ENCODE measurements at regions of chr19 and their contacts with region 1.

Region 1: GRCh38 chr19:9834726-9835506 is at the start of gene PIN1:
- DNase-seq: peak; percentile 98 to 100 (median 99)
- ATAC-seq: peak; percentile 98
- H3K4me3 ChIP-seq: peak within 1 kb of the TSS; percentile 92
- H3K4me3 Mint-ChIP-seq: peak within 1 kb of the TSS; percentile 83 to 97 (median 95)
- H3K27ac ChIP-seq: peak within 1 kb of the TSS; percentile 71
- H3K27ac Mint-ChIP-seq: peak within 1 kb of the TSS; percentile 82 to 99 (median 94)
- H3K4me1 ChIP-seq: peaks cover 10 to 11% of the 10 kb centered on the region in 2 donors
- H3K4me1 Mint-ChIP-seq: peaks cover 16 to 32% (median 20%) of the 10 kb centered on the region in 7 donors
- H3K27me3 ChIP-seq: no peaks in the 10 kb centered on the region
- H3K27me3 Mint-ChIP-seq: no peaks in the 10 kb centered on the region
- total RNA-seq, gene PIN1: 41.4 to 93.2 (median 61.1) TPM

Region 2: GRCh38 chr19:9671655-9672054 is 163.3 kb before region 1 on chr19:
- CTCF ChIA-PET with region 1: no interaction called
- POLR2A ChIA-PET with region 1: no interaction called
- intact Hi-C with region 1: no loop called
- DNase-seq: no peak
- ATAC-seq: no peak
- H3K4me3 ChIP-seq: no peak overlapping the region
- H3K4me3 Mint-ChIP-seq: peak overlapping the region in 5 of 10 donors; percentile 9 to 62 (median 34)
- H3K27ac ChIP-seq: no peak overlapping the region
- H3K27ac Mint-ChIP-seq: no peak overlapping the region
- H3K4me1 ChIP-seq: peaks cover 0 to 8% of the 10 kb centered on the region in 2 donors
- H3K4me1 Mint-ChIP-seq: peaks cover 11 to 53% (median 43%) of the 10 kb centered on the region in 7 donors
- H3K27me3 ChIP-seq: no peaks in the 10 kb centered on the region
- H3K27me3 Mint-ChIP-seq: no peaks in the 10 kb centered on the region

Region 3: DNA sequence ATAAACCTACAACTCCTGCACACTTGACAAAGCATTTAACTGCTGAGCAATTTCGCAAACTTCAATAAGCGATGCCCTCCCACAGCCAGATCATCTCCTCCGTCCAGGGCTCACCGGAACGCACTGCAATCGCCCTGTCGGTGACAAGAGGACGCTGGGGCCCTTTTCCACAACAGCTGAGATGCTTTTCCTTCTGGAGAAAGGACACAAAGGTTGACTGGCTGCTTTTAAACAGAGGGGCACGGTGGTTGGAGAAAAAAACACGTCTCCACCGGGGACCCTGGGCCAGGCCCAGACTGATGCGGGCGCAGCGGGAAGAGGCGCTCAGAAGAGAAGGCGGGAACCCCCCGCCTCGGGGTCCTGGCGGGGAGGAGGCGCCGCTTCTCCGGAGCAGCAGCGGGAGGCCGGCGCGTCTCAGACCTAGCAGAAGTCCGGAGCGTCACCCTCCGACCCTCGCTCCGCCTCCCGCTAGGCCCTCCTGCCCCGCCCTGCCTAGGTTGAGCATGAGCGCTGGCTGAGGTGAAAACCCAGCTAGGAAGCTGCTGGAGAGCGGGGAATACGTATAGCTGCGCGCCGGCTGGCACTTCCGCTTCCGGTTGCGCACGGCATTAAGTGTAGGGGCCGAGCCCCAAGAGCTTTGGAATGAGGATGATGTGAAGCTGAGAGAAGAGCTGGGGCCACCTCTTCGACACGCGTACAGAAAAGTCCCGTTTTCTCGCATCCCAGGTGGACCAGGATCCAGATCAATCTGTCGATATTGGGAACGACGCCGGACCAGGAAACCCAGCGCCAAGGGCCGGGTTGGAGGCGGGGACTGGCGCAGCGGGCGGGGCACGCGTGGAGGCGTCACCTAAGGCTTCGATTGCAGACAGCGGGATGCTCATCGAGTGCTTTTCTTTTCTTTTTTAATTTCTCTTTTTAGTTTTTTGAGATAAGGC is 66.5 kb before region 1 on chr19 and contains the start of gene ZNF846:
- CTCF ChIA-PET with region 1: no interaction called
- POLR2A ChIA-PET with region 1: no interaction called
- intact Hi-C with region 1: loop called in 1 of 2 experiments (anchors 1 kb)
- DNase-seq: peak; percentile 83 to 94 (median 91)
- ATAC-seq: peak; percentile 98
- H3K4me3 ChIP-seq: peak within 1 kb of the TSS; percentile 95
- H3K4me3 Mint-ChIP-seq: peak within 1 kb of the TSS; percentile 81 to 99 (median 95)
- H3K27ac ChIP-seq: peak within 1 kb of the TSS; percentile 93
- H3K27ac Mint-ChIP-seq: peak within 1 kb of the TSS; percentile 92 to 100 (median 97)
- H3K4me1 ChIP-seq: peaks cover 8 to 10% of the 10 kb centered on the region in 2 donors
- H3K4me1 Mint-ChIP-seq: peaks cover 0 to 21% (median 9%) of the 10 kb centered on the region in 7 donors
- H3K27me3 ChIP-seq: no peaks in the 10 kb centered on the region
- H3K27me3 Mint-ChIP-seq: no peaks in the 10 kb centered on the region
- total RNA-seq, gene ZNF846: 5.1 to 24.8 (median 13.0) TPM

Region 4: DNA sequence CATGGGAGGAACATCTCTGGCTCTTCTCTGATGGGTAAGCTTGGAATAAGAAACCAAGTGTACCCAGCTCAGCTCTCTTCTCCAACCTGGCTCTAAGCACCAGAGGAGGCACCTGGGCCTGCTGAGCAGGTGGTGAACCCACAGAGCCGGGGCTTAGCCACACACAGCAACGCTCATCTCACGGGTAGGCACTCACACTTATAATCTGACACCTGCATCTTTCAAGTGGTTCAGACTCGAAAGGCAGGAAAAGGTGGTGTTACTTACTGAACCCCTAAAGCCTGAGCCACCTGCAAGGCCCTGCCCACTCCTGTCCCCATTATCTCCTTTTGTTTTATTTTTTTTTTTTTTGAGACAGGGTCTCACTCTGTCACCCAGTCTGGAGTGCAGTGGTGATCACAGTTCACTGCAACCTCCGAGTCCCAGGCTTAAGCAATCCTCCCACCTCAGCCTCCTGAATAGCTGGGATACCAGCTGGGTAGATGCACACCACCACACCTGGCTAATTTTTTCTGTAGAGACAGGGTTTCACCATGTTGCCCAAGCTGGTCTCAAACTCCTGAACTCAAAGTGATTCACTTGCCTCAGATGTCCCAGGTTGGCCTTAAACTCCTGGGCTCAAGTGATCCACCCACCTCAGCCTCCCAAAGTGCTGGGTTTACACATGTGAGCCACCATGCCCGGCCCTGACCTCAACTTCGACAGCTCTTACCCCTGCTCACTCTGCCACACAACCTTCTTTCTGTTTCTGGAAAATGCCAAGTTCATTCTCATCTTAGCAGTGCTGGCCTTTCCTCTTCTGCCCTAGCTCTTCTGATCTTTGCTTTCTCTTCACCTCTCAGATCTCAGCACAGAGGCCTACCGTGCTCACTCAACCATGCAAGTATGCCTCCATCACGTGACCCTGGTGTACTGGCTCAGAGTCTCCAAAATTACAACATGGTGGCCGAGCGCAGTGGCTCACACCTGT is 25.8 kb before region 1 on chr19:
- CTCF ChIA-PET with region 1: no interaction called
- POLR2A ChIA-PET with region 1: no interaction called
- intact Hi-C with region 1: loop called in 1 of 2 experiments (anchors 1 kb)
- DNase-seq: peak in 7 of 9 donors; percentile 38 to 73 (median 68)
- ATAC-seq: peak; percentile 90
- H3K4me3 ChIP-seq: no peak overlapping the region
- H3K4me3 Mint-ChIP-seq: peak overlapping the region in 9 of 10 donors; percentile 6 to 83 (median 63)
- H3K27ac ChIP-seq: peak overlapping the region; percentile 61
- H3K27ac Mint-ChIP-seq: peak overlapping the region; percentile 4 to 95 (median 85)
- H3K4me1 ChIP-seq: peaks cover 29 to 52% of the 10 kb centered on the region in 2 donors
- H3K4me1 Mint-ChIP-seq: peaks cover 9 to 50% (median 36%) of the 10 kb centered on the region in 7 donors
- H3K27me3 ChIP-seq: no peaks in the 10 kb centered on the region
- H3K27me3 Mint-ChIP-seq: no peaks in the 10 kb centered on the region

Region 5: GRCh38 chr19:9865732-9866501 is 31.0 kb after region 1 on chr19:
- CTCF ChIA-PET with region 1: interaction called, 3 read pairs
- POLR2A ChIA-PET with region 1: interaction called, 6 read pairs
- intact Hi-C with region 1: loop called (anchors 1 to 2 kb)
- DNase-seq: peak in 6 of 9 donors; percentile 67 to 80 (median 72)
- ATAC-seq: peak; percentile 88
- H3K4me3 ChIP-seq: peak overlapping the region; percentile 25
- H3K4me3 Mint-ChIP-seq: peak overlapping the region; percentile 43 to 86 (median 80)
- H3K27ac ChIP-seq: peak overlapping the region; percentile 6
- H3K27ac Mint-ChIP-seq: peak overlapping the region; percentile 72 to 97 (median 86)
- H3K4me1 ChIP-seq: peaks cover 39 to 63% of the 10 kb centered on the region in 2 donors
- H3K4me1 Mint-ChIP-seq: peaks cover 35 to 64% (median 57%) of the 10 kb centered on the region in 7 donors
- H3K27me3 ChIP-seq: no peaks in the 10 kb centered on the region
- H3K27me3 Mint-ChIP-seq: no peaks in the 10 kb centered on the region

Region 6: DNA sequence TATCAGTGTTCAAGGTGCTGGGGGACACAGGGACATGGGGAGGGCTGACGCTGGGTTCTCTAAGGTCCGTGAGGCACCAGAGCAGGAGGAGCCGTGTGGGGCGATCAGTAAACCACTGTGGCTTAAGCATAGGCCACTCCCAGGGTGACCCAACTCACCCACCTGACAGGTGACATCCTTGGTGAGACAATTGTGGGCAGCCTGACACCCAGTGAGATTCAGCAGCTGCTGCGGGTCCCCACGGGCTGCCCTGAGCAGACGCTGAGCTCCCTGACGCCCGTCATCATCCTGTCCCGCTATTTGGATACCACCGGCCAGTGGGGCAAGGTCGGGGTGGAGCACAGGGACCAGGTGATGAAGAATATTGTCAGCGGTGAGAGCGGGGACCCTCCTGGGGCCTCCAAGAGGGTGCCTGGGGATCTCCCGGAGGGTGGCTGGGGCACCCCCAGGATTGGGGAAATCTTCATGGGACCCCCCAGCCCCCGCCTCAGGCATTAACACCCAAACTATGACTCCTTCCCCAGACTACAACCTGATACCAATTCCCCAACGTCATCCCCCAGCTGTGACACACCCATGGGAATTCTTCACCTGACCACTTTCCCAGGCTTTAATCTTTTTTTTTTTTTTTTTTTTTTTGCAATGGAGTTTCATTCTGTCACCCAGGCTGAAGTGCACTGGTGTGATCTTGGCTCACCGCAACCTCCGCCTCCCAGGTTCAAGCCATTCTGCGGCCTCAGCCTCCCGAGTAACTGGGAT is 217.9 kb after region 1 on chr19:
- CTCF ChIA-PET with region 1: no interaction called
- POLR2A ChIA-PET with region 1: no interaction called
- intact Hi-C with region 1: no loop called
- DNase-seq: no peak
- ATAC-seq: no peak
- H3K4me3 ChIP-seq: no peak overlapping the region
- H3K4me3 Mint-ChIP-seq: no peak overlapping the region
- H3K27ac ChIP-seq: no peak overlapping the region
- H3K27ac Mint-ChIP-seq: no peak overlapping the region
- H3K4me1 ChIP-seq: no peaks in the 10 kb centered on the region
- H3K4me1 Mint-ChIP-seq: peaks cover 0 to 6% (median 0%) of the 10 kb centered on the region in 7 donors
- H3K27me3 ChIP-seq: no peaks in the 10 kb centered on the region
- H3K27me3 Mint-ChIP-seq: no peaks in the 10 kb centered on the region

Region 7: GRCh38 chr19:10085641-10086590 is 251.0 kb after region 1 on chr19 and contains the start of gene SHFL:
- CTCF ChIA-PET with region 1: no interaction called
- POLR2A ChIA-PET with region 1: interaction called, 3 read pairs
- intact Hi-C with region 1: loop called in 1 of 2 experiments (anchors 1 kb)
- DNase-seq: peak; percentile 71 to 90 (median 83)
- ATAC-seq: peak; percentile 98
- H3K4me3 ChIP-seq: peak within 1 kb of the TSS; percentile 94
- H3K4me3 Mint-ChIP-seq: peak within 1 kb of the TSS; percentile 75 to 92 (median 90)
- H3K27ac ChIP-seq: peak within 1 kb of the TSS; percentile 90
- H3K27ac Mint-ChIP-seq: peak within 1 kb of the TSS; percentile 81 to 92 (median 88)
- H3K4me1 ChIP-seq: peaks cover 4 to 9% of the 10 kb centered on the region in 2 donors
- H3K4me1 Mint-ChIP-seq: peaks cover 8 to 21% (median 8%) of the 10 kb centered on the region in 7 donors
- H3K27me3 ChIP-seq: no peaks in the 10 kb centered on the region
- H3K27me3 Mint-ChIP-seq: no peaks in the 10 kb centered on the region
- total RNA-seq, gene SHFL: 67.8 to 112 (median 102) TPM

Region 8: DNA sequence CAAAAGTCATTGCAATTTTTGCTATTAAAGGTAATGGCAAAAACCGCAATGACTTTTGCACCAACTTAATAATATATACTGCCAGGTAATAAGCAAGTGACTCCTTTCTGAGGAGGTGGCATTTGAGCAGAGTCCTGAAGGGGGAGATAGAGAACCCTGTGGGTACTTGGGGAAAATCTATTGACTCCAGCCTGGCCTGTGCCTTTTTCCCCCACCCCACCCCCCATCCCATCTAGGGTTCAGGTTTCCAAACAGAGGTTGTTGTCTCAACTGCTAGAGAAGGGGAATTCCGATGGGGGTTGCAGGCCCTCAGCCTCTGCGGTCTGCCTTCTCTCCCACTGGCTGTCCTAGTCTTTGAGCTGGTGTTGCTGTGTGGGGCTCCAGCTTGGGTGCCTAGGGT is 384.8 kb after region 1 on chr19:
- CTCF ChIA-PET with region 1: no interaction called
- POLR2A ChIA-PET with region 1: no interaction called
- intact Hi-C with region 1: no loop called
- DNase-seq: peak in 3 of 9 donors; percentile 17 to 33 (median 17)
- ATAC-seq: peak; percentile 81
- H3K4me3 ChIP-seq: no peak overlapping the region
- H3K4me3 Mint-ChIP-seq: no peak overlapping the region
- H3K27ac ChIP-seq: no peak overlapping the region
- H3K27ac Mint-ChIP-seq: no peak overlapping the region
- H3K4me1 ChIP-seq: no peaks in the 10 kb centered on the region
- H3K4me1 Mint-ChIP-seq: peaks cover 0 to 8% (median 3%) of the 10 kb centered on the region in 7 donors
- H3K27me3 ChIP-seq: no peaks in the 10 kb centered on the region
- H3K27me3 Mint-ChIP-seq: no peaks in the 10 kb centered on the region

Region 9: DNA sequence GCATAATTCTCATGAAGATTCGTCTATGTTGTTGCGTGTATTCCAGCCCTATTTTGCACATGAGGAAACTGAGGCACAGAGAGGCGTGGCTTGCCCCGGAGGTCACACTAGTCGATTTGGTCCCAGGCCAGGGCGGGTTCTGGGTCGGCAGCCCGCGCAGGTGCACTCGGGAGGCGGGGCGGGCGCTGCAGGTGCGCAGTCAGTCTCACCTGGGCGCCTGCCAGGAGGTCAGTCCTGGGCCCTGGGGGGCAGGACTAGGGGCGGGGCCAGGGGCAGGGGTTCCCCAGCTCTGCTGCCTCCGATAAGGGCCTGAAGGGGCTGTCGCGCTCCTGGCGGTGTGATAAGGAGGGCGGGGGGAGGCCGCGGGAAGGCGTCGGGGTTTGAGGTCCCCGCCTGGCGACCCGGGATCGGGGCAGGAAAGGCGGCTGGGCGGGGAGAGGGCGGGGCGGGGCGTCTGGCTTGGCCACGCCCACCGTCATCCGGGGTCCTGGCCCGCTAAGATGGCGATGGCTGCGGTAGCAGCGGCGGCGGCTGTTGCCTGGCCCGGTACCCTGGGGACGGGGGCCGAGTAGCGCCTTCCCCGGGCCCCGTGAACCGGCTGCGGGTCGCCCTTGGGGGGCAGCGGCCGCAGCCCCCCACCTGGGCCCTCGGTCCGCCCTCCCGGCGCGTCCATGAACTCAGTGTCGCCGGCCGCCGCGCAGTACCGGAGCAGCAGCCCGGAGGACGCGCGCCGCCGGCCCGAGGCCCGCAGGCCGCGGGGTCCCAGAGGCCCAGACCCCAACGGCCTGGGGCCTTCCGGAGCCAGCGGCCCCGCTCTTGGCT is 708.7 kb after region 1 on chr19 and contains the start of gene ATG4D:
- CTCF ChIA-PET with region 1: no interaction called
- POLR2A ChIA-PET with region 1: no interaction called
- intact Hi-C with region 1: no loop called
- DNase-seq: peak; percentile 77 to 90 (median 84)
- ATAC-seq: peak; percentile 93
- H3K4me3 ChIP-seq: peak within 1 kb of the TSS; percentile 83
- H3K4me3 Mint-ChIP-seq: peak within 1 kb of the TSS; percentile 83 to 93 (median 88)
- H3K27ac ChIP-seq: peak within 1 kb of the TSS; percentile 96
- H3K27ac Mint-ChIP-seq: peak within 1 kb of the TSS; percentile 72 to 91 (median 87)
- H3K4me1 ChIP-seq: peaks cover 13 to 19% of the 10 kb centered on the region in 2 donors
- H3K4me1 Mint-ChIP-seq: peaks cover 8 to 27% (median 16%) of the 10 kb centered on the region in 7 donors
- H3K27me3 ChIP-seq: no peaks in the 10 kb centered on the region
- H3K27me3 Mint-ChIP-seq: peaks cover 4 to 28% (median 5%) of the 10 kb centered on the region in 5 donors
- total RNA-seq, gene ATG4D: 41.7 to 70.3 (median 56.7) TPM